T-cell (primary cell): ENCODE measurements at regions of chr6 and their contacts with region 1.

Region 1: DNA sequence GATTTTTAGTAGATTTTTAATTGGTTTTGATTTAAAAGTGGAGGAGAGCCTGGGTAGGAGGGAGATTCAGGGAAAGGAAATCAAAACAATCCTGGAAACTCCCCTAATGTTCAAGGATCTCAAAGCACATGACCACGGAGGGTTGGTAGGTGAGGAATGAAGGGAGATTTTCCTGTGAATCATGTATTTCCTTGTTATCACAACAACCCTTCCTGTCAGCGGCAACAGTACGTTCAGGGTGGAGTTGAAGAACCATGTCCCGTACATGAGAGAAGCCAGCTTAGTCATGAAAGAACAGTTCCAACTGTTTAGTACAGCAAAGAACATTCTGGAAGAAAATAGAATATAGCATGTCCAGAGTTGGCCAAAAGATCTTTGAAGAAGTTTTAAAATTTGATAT is 79.4 kb upstream of the SCAF8 start:
- DNase-seq: no peak
- ATAC-seq: no peak
- H3K4me3 ChIP-seq: no peak overlapping the region
- H3K4me3 Mint-ChIP-seq: no peak overlapping the region
- H3K27ac ChIP-seq: no peak overlapping the region
- H3K27ac Mint-ChIP-seq: no peak overlapping the region
- H3K4me1 ChIP-seq: no peaks in the 10 kb centered on the region
- H3K4me1 Mint-ChIP-seq: no peaks in the 10 kb centered on the region
- H3K27me3 ChIP-seq: no peaks in the 10 kb centered on the region
- H3K27me3 Mint-ChIP-seq: peaks cover 3% of the 10 kb centered on the region in 2 donors

Region 2: GRCh38 chr6:155319902-155320301 is 666.0 kb after region 1 on chr6:
- CTCF ChIA-PET with region 1: interaction called in 1 of 2 experiments, 10 read pairs
- POLR2A ChIA-PET with region 1: no interaction called
- DNase-seq: no peak
- ATAC-seq: no peak
- H3K4me3 ChIP-seq: no peak overlapping the region
- H3K4me3 Mint-ChIP-seq: no peak overlapping the region
- H3K27ac ChIP-seq: no peak overlapping the region
- H3K27ac Mint-ChIP-seq: no peak overlapping the region
- H3K4me1 ChIP-seq: peaks cover 0 to 7% of the 10 kb centered on the region in 2 experiments
- H3K4me1 Mint-ChIP-seq: peaks cover 6 to 12% (median 9%) of the 10 kb centered on the region in 3 donors
- H3K27me3 ChIP-seq: no peaks in the 10 kb centered on the region
- H3K27me3 Mint-ChIP-seq: no peaks in the 10 kb centered on the region